ENCODE measurements at regions of chr2 and their contacts with region 1.

Region 1: DNA sequence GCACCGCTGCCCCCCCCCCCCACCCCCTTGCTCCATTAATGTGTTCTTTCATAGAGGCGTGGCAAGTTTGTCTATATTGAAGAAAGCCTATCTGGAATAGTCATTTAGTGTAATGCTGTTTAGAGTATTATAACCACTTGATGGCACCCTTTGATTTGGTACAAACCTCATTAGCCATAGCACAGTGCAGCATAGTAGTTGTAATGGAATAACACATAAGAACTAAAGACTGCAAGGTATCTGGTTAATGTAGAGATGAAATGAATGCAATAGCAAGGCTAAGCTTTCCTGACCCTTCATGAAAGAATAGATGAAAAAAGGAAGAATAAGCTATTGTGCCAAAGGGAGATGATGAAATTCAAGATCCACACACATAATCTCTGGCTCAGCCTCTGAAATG is 81.9 kb downstream of the EHBP1 start:
- DNase-seq: peak; percentile 76
- H3K4me3 ChIP-seq: no peak overlapping the region
- H3K27ac ChIP-seq: no peak overlapping the region
- H3K4me1 ChIP-seq: no peaks in the 10 kb centered on the region
- H3K27me3 ChIP-seq: no peaks in the 10 kb centered on the region
- CTCF ChIP-seq: peak; percentile 61

Region 2: GRCh38 chr2:62698653-62699052 is 88.7 kb before region 1 on chr2:
- CTCF ChIA-PET with region 1: no interaction called
- POLR2A ChIA-PET with region 1: no interaction called
- intact Hi-C with region 1: no loop called
- DNase-seq: no peak
- H3K4me3 ChIP-seq: no peak overlapping the region
- H3K27ac ChIP-seq: no peak overlapping the region
- H3K4me1 ChIP-seq: no peaks in the 10 kb centered on the region
- H3K27me3 ChIP-seq: no peaks in the 10 kb centered on the region
- CTCF ChIP-seq: no peak

Region 3: DNA sequence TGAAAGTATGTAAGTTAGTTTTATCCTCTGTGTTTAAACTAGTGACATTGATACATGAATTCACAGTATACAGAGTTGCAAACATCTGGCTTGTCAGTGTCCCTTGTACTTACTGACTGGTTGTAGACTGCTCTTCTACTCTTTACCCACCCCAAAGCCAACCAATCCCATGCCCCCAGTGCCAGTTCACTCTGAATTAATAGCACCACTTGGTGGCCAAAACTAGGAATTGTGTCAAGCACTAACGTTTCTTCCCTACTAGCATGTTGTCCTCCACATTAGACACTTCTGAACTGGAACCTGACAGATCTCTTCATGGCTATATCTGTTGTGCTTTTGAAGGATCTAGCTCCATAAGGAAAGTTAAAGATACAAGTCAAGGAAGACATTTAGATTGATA is 236.1 kb after region 1 on chr2:
- CTCF ChIA-PET with region 1: interaction called, 5 read pairs
- POLR2A ChIA-PET with region 1: no interaction called
- intact Hi-C with region 1: loop called (anchors 2 kb)
- DNase-seq: peak; percentile 84
- H3K4me3 ChIP-seq: no peak overlapping the region
- H3K27ac ChIP-seq: no peak overlapping the region
- H3K4me1 ChIP-seq: no peaks in the 10 kb centered on the region
- H3K27me3 ChIP-seq: no peaks in the 10 kb centered on the region
- CTCF ChIP-seq: peak; percentile 75

Region 4: DNA sequence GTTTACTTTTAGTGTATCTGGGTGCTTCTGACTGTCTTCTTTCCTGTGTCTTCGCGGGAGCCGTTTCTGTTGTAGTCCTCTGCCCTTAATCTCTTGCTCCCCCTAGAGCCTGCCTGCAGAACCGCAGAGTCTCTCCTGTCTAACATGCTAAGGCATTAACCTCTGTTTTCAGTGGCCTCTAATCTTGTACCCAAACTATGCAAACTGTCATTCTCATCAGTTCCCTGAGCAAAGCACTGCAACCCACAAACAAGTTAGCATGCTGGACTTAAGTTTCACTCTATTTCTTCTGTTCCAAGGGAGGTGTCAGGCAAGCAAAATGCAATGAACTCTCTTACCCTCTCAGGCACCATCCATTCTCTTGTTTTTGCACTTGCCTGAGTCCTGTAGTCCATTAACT is 401.6 kb after region 1 on chr2:
- CTCF ChIA-PET with region 1: no interaction called
- POLR2A ChIA-PET with region 1: no interaction called
- intact Hi-C with region 1: loop called (anchors 5 kb)
- DNase-seq: peak; percentile 75
- H3K4me3 ChIP-seq: no peak overlapping the region
- H3K27ac ChIP-seq: no peak overlapping the region
- H3K4me1 ChIP-seq: no peaks in the 10 kb centered on the region
- H3K27me3 ChIP-seq: no peaks in the 10 kb centered on the region
- CTCF ChIP-seq: peak; percentile 94

Region 5: GRCh38 chr2:63424329-63425078 is 637.1 kb after region 1 on chr2:
- CTCF ChIA-PET with region 1: no interaction called
- POLR2A ChIA-PET with region 1: no interaction called
- intact Hi-C with region 1: loop called (anchors 10 kb)
- DNase-seq: peak; percentile 78
- H3K4me3 ChIP-seq: no peak overlapping the region
- H3K27ac ChIP-seq: no peak overlapping the region
- H3K4me1 ChIP-seq: no peaks in the 10 kb centered on the region
- H3K27me3 ChIP-seq: no peaks in the 10 kb centered on the region
- CTCF ChIP-seq: peak; percentile 75

Region 6: GRCh38 chr2:63488118-63488713 is 700.8 kb after region 1 on chr2:
- CTCF ChIA-PET with region 1: interaction called, 4 read pairs
- POLR2A ChIA-PET with region 1: no interaction called
- intact Hi-C with region 1: loop called (anchors 5 kb)
- DNase-seq: peak; percentile 27
- H3K4me3 ChIP-seq: no peak overlapping the region
- H3K27ac ChIP-seq: no peak overlapping the region
- H3K4me1 ChIP-seq: no peaks in the 10 kb centered on the region
- H3K27me3 ChIP-seq: no peaks in the 10 kb centered on the region
- CTCF ChIP-seq: peak; percentile 83

Measured in A673 (cell line).